PC-9 (cell line): ENCODE measurements at regions of chr11 and their contacts with region 1.

Region 1: DNA sequence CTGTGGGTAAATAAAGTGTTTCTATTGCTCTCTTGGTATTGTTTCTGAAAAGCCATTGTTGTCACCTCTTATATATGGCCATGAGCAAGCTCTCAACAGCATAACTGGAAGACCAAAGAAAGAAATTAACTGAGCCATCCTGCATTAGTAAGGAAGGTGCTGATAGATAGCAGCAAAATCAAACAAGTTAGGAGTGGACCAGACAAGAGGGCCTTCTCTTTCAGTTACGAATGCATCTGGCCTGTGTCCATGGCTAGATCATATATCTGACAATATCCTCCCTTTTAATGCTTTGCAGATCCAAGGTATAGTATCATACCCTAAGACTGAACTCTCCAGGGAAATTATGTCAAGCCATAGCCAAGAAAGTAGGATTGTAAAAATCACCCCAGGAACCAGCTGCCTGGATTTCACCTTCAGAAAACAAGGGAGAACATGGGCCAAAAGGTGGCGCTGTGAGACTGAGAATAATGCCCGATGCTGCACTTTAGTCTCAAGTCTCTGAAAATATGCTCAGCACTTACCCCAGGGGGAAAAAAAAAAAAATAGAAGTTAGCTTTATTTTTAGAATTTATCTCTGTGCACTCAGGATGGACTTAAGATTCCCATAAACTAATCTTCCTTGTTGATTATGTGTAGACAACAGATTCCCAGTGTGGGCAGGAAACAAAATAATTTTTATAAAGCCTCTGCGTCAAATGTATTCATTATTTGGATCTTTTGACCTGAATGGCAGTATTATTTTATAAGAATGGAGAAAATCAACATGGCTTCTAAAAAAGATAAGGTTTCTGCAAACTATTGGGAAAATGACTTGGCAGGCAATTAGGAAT is 415.1 kb downstream of the ETS1 start:
- DNase-seq: peak; percentile 57 to 77
- H3K4me3 ChIP-seq: no peak overlapping the region
- H3K27ac ChIP-seq: no peak overlapping the region
- H3K4me1 ChIP-seq: peaks cover 7% of the 10 kb centered on the region; the same call in 1 of the 2 replicates
- H3K27me3 ChIP-seq: no peaks in the 10 kb centered on the region
- CTCF ChIP-seq: peak; percentile 89

Region 2: DNA sequence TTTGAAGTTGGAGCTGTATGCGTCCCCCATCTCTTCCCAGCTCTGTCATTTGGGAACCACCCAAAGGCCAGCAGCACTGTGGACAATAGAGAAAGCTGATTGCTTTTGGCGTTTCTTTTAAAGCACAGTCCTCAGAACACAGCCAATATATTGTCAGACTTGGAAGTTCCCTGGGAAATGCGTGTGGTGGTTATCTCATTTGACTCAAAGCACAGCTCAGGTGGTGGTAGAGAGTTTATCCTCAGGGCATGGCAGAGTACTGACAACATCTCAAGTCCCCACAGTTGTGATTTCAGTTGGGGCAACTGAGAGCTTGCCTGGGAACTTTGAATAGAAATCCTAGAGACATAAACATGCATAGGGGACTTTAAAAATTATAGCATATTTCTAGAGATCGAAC is 186.2 kb before region 1 on chr11:
- CTCF ChIA-PET with region 1: no interaction called
- POLR2A ChIA-PET with region 1: no interaction called
- intact Hi-C with region 1: no loop called
- DNase-seq: no peak
- H3K4me3 ChIP-seq: no peak overlapping the region
- H3K27ac ChIP-seq: no peak overlapping the region
- H3K4me1 ChIP-seq: no peaks in the 10 kb centered on the region
- H3K27me3 ChIP-seq: no peaks in the 10 kb centered on the region
- CTCF ChIP-seq: no peak

Region 3: DNA sequence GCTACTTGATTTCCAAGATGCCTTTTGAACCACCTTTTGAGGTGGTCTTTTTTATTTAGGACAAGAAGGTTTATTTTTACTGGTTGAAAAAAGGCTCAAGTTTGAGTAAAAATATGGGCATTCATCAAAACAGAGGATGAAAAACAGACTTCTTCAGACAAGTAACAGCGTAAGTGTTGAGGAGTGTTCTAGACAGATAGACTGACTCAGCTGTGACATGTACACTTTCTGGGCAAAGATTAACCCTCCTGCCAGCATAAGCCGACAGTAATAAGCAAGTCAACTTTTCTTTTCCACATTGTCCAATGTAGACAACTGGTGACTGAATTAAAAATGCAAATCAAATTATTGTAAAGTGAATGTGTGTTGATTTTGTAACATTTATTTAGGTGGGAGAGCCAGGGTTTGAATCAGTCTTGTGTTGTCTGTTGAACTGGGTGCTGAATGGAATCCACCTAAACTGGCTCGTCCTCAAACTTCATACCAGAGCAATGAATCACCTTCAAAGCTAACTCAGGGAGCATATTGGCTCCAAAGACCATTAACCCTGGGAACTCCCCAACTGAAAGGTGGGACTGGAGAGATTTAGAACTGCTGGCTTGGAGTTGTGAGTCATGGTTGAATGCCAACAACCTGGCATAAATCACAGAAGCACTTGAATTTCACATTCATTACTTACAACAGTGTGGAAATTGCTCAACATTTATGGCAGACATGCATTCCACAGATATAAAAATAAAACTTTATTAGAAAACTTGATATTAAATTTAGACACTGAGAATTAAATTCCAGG is 38.1 kb after region 1 on chr11:
- CTCF ChIA-PET with region 1: interaction called, 3 read pairs
- POLR2A ChIA-PET with region 1: no interaction called
- intact Hi-C with region 1: loop called (anchors 5 kb)
- DNase-seq: peak; percentile 77 to 100
- H3K4me3 ChIP-seq: peak overlapping the region; percentile 16; the same call in 1 of the 2 replicates
- H3K27ac ChIP-seq: peak overlapping the region; percentile 100
- H3K4me1 ChIP-seq: peaks cover 59% of the 10 kb centered on the region
- H3K27me3 ChIP-seq: no peaks in the 10 kb centered on the region
- CTCF ChIP-seq: no peak

Region 4: GRCh38 chr11:128342511-128343134 is 170.4 kb after region 1 on chr11:
- CTCF ChIA-PET with region 1: no interaction called
- POLR2A ChIA-PET with region 1: no interaction called
- intact Hi-C with region 1: loop called (anchors 5 kb)
- DNase-seq: peak; percentile 58 to 99
- H3K4me3 ChIP-seq: no peak overlapping the region
- H3K27ac ChIP-seq: peak overlapping the region; percentile 71
- H3K4me1 ChIP-seq: peaks cover 34% of the 10 kb centered on the region
- H3K27me3 ChIP-seq: no peaks in the 10 kb centered on the region
- CTCF ChIP-seq: no peak

Region 5: DNA sequence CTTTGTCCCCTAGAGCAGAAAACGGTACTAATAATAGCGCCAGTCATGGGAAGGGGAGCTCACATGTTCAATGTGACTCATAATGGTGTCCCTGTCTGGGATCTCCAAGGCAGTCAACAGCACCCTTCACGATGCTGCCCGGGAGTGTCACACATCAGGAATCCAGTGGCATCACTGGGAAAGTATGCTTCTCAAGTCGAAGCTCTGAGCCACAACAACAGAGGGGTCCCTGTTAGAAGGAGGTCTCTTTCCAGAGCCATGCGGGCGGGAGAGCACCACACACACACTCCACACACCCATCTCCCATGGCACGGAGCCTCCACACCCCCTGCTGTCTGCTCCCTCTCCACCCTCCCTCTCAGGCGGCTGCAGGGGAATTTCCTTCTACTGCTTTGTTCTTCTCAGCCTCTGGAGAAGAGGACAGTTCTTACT is 295.4 kb after region 1 on chr11:
- CTCF ChIA-PET with region 1: no interaction called
- POLR2A ChIA-PET with region 1: no interaction called
- intact Hi-C with region 1: loop called (anchors 5 kb)
- DNase-seq: peak; percentile 69 to 87
- H3K4me3 ChIP-seq: no peak overlapping the region
- H3K27ac ChIP-seq: peak overlapping the region; percentile 62
- H3K4me1 ChIP-seq: peaks cover 18% of the 10 kb centered on the region
- H3K27me3 ChIP-seq: no peaks in the 10 kb centered on the region
- CTCF ChIP-seq: no peak

Region 6: DNA sequence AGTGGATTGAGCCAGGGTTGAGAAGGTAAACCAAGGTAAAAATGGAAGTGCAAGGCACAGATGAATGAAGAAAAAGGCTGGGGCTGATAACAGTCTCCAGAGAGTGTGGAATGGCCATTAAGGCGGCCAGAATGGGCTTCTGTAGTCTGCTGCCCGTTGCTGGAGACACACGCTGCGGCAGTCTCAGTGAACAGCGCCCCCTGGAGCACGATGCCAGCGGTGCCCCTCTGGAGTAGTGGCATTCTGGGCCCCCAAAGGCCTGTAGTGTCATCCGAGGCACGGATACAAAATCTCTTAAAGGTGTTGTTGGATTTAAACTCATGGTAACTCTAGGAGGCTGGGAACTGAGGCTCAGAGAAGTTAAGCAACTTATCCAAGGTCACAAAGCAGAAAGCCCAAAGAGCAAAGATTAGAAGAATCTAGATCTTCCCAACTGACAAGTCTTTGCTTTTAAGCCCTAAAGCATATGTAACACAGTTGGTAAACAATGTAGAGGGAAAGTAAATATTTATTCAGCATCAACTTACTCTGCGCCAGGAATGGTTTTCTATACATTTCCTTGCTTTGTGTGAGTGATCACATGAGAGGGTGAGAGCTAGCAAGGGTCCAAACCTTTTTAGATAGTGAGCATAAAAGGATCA is 676.7 kb after region 1 on chr11:
- CTCF ChIA-PET with region 1: no interaction called
- POLR2A ChIA-PET with region 1: no interaction called
- intact Hi-C with region 1: loop called (anchors 5 kb)
- DNase-seq: peak in 1 of 2 experiments; percentile 46
- H3K4me3 ChIP-seq: no peak overlapping the region
- H3K27ac ChIP-seq: no peak overlapping the region
- H3K4me1 ChIP-seq: no peaks in the 10 kb centered on the region
- H3K27me3 ChIP-seq: peaks cover 15% of the 10 kb centered on the region; the same call in 1 of the 2 replicates
- CTCF ChIP-seq: peak; percentile 72